B cell (primary cell): ENCODE measurements at regions of chr4 and their contacts with region 1.

Region 1: DNA sequence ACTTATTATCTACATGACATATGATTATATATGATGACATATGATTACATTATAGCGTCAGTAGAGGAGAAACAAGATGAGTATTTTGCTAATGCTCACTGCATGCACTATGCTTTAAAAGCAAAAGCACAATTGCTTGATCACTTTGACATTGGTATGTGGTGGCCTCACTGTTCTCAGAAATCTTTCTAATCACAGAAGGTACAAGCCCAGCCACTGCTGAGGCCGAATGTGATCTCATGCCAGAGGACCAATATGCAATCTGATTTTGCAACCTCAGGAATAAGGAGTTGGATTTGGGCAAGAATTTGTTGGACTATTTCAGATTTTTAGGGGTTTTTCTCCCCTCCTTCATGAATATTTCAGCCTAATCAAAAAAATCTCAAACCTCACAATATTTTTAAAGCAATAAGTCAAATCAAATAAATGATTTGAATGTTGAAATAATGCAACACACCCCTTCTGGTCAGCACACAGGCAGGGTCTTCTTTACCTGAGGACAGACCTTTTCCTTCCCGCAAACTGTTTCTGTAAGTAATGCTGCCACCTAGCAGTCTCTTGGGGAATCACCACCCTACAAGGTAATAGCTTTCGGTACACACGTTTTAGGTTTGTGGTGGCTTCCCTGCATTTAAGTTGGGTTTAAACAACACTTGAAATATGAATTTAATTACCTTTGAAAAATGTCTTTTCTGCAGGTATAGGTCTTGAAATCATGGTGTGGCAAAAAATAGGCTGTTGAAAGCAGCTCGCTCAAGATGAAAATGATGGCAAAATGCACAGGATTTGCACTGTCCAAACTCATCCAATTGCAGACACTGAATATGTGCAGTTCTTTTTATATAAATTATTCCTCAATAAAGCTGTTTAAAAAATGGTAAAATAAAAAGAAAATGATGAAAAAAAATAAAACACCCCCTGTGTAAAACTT is 4.8 kb upstream of the CXCL13 start:
- DNase-seq: peak; percentile 36
- ATAC-seq: no peak
- H3K4me3 ChIP-seq: no peak overlapping the region
- H3K4me3 Mint-ChIP-seq: no peak overlapping the region
- H3K27ac ChIP-seq: no peak overlapping the region
- H3K27ac Mint-ChIP-seq: no peak overlapping the region
- H3K4me1 ChIP-seq: no peaks in the 10 kb centered on the region
- H3K4me1 Mint-ChIP-seq: no peaks in the 10 kb centered on the region
- H3K27me3 ChIP-seq: no peaks in the 10 kb centered on the region
- H3K27me3 Mint-ChIP-seq: no peaks in the 10 kb centered on the region
- CTCF ChIP-seq: peak; percentile 84

Region 2: GRCh38 chr4:77240469-77241066 is 360.2 kb before region 1 on chr4:
- CTCF ChIA-PET with region 1: interaction called, 9 read pairs
- POLR2A ChIA-PET with region 1: no interaction called
- intact Hi-C with region 1: loop called (anchors 2 kb)
- DNase-seq: peak; percentile 56
- ATAC-seq: peak; percentile 70
- H3K4me3 ChIP-seq: no peak overlapping the region
- H3K4me3 Mint-ChIP-seq: no peak overlapping the region
- H3K27ac ChIP-seq: no peak overlapping the region
- H3K27ac Mint-ChIP-seq: no peak overlapping the region
- H3K4me1 ChIP-seq: no peaks in the 10 kb centered on the region
- H3K4me1 Mint-ChIP-seq: no peaks in the 10 kb centered on the region
- H3K27me3 ChIP-seq: no peaks in the 10 kb centered on the region
- H3K27me3 Mint-ChIP-seq: peaks cover 11% of the 10 kb centered on the region
- CTCF ChIP-seq: peak; percentile 76

Region 3: DNA sequence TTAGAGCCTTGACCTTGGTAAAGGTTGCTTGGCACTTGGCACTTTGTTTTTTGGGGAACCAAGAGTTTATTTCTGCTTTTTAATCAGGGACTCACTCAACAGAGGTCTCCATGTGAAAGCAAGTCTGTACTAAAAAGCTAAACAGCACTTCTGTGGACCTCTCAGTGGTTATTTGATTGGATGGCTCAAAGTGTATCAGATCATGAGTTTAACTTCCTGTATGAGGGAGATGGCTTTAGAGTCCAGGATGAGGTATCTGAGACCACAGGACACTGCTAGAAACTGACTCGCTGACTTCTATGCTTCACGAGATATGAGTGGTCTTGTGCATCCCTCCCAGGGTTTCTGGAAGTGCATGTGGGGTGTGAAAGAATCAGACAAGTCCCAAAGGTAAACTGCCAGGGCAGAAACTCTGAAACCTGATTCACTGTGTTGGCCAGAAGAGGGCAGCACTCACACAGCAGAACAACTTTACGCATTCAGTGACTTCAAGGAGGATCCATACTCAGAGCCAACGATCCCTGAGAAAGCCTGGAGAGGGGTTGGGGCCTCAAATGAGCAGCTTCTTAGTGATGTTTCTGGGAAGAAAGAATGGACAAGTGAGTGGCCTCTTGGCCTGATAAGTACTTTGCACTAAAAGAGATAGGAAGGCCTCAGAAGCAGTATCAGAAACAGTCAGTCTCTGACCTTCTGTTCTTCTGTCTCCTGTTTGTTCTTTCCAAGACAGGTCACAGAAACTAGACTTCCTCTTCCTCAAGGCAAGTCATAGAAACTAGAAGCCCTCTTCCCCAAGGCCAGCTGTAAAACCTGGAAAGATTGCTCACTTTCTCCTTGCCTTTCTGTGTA is 215.4 kb before region 1 on chr4:
- CTCF ChIA-PET with region 1: interaction called, 33 read pairs
- POLR2A ChIA-PET with region 1: no interaction called
- intact Hi-C with region 1: loop called (anchors 1 kb)
- DNase-seq: peak; percentile 64
- ATAC-seq: no peak
- H3K4me3 ChIP-seq: no peak overlapping the region
- H3K4me3 Mint-ChIP-seq: no peak overlapping the region
- H3K27ac ChIP-seq: no peak overlapping the region
- H3K27ac Mint-ChIP-seq: no peak overlapping the region
- H3K4me1 ChIP-seq: no peaks in the 10 kb centered on the region
- H3K4me1 Mint-ChIP-seq: peaks cover 3% of the 10 kb centered on the region
- H3K27me3 ChIP-seq: peaks cover 0 to 2% (median 0%) of the 10 kb centered on the region in 4 experiments
- H3K27me3 Mint-ChIP-seq: no peaks in the 10 kb centered on the region
- CTCF ChIP-seq: peak; percentile 84

Region 4: DNA sequence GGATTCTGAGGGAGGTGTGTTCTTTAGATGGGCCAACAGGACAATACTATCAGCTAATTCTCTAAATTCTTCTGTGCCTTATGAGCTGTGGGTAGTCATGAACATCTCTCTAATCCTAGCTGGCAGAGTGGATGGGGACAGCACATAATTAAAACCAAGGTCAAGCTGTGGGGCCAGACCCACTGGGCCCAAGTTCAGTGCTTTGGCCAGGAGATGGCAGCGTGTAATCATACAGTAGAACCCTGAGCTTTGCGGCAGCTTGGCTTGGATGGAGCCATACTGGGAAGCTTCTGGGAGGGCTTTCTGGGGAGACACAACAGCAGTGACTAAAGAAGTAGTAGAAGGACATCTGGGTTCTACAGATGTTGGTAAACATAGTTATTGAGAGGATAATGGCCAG is 135.5 kb before region 1 on chr4:
- CTCF ChIA-PET with region 1: interaction called, 23 read pairs
- POLR2A ChIA-PET with region 1: no interaction called
- intact Hi-C with region 1: loop called (anchors 1 kb)
- DNase-seq: no peak
- ATAC-seq: no peak
- H3K4me3 ChIP-seq: no peak overlapping the region
- H3K4me3 Mint-ChIP-seq: no peak overlapping the region
- H3K27ac ChIP-seq: no peak overlapping the region
- H3K27ac Mint-ChIP-seq: no peak overlapping the region
- H3K4me1 ChIP-seq: no peaks in the 10 kb centered on the region
- H3K4me1 Mint-ChIP-seq: no peaks in the 10 kb centered on the region
- H3K27me3 ChIP-seq: no peaks in the 10 kb centered on the region
- H3K27me3 Mint-ChIP-seq: peaks cover 4% of the 10 kb centered on the region
- CTCF ChIP-seq: no peak

Region 5: GRCh38 chr4:77613267-77613666 is 12.5 kb after region 1 on chr4:
- CTCF ChIA-PET with region 1: interaction called, 13 read pairs
- POLR2A ChIA-PET with region 1: no interaction called
- intact Hi-C with region 1: no loop called
- DNase-seq: no peak
- ATAC-seq: no peak
- H3K4me3 ChIP-seq: no peak overlapping the region
- H3K4me3 Mint-ChIP-seq: no peak overlapping the region
- H3K27ac ChIP-seq: no peak overlapping the region
- H3K27ac Mint-ChIP-seq: no peak overlapping the region
- H3K4me1 ChIP-seq: no peaks in the 10 kb centered on the region
- H3K4me1 Mint-ChIP-seq: no peaks in the 10 kb centered on the region
- H3K27me3 ChIP-seq: no peaks in the 10 kb centered on the region
- H3K27me3 Mint-ChIP-seq: peaks cover 3% of the 10 kb centered on the region
- CTCF ChIP-seq: no peak

Region 6: DNA sequence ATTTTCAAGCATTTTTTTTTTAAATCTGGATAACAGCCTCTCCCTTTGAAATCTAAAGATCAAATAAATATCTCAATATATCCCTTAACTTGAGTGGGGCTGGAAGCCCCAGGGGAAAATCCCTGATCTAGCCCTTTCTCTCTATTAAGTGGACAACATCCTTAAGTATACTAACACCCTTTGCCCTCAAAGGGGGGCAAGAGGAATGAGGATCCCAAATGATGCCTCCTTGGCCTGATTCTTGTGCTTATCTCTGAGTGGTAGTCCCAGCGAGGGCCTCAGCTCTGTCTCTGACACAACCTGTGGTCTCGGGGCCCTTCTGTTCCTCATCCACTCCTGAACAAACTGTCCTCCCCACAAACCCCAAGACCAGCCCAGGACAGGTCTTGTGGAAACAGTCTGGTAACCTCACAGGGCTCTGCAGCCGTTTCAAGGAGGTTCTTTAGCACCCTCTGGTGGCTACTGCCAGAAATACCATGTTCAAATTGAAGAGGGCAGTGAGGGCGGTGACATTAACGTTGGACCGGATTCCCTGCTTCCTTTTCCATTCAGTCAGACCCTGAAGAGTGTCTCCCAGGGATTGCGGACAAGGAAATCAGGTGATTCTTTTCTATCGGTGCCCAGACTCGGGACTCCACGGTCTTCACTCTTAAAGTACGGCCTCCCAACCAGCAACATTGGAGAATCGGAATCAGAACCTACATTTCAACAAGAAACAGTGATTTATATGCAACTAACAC is 17.8 kb after region 1 on chr4:
- CTCF ChIA-PET with region 1: interaction called, 11 read pairs
- POLR2A ChIA-PET with region 1: no interaction called
- intact Hi-C with region 1: no loop called
- DNase-seq: peak; percentile 65
- ATAC-seq: peak; percentile 69
- H3K4me3 ChIP-seq: no peak overlapping the region
- H3K4me3 Mint-ChIP-seq: no peak overlapping the region
- H3K27ac ChIP-seq: no peak overlapping the region
- H3K27ac Mint-ChIP-seq: no peak overlapping the region
- H3K4me1 ChIP-seq: peaks cover 0 to 3% of the 10 kb centered on the region in 2 donors
- H3K4me1 Mint-ChIP-seq: peaks cover 4% of the 10 kb centered on the region
- H3K27me3 ChIP-seq: no peaks in the 10 kb centered on the region
- H3K27me3 Mint-ChIP-seq: peaks cover 9% of the 10 kb centered on the region
- CTCF ChIP-seq: peak; percentile 93